Psoas muscle (tissue), 8 donors: ENCODE measurements at regions of chr19 and their contacts with region 1.

Region 1: DNA sequence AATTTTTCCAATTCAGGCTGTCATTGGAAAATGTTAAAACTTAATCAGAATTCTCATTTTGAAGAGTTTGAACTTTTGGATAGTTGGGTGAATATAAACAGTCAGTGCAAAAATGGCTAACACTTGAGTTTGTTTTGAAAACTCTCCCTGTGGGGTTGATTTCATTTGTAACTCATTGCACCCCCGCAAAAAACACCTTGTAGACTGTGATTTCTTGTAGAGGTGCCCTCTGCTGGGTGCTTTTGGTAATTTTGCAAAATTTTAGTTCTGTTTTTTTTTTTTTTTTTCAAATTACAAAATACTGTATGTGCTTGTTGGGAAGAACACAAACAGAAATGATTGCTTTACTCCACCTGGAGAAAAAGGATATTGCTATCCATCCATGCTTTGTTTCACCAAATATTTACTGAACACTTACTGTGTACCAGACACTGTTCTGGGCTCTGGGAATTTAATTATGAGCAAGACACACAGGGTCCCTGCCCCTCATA is 28.2 kb upstream of the GPI start:
- DNase-seq: no peak
- ATAC-seq: peak in 2 of 4 donors; percentile 40 to 54
- H3K4me3 ChIP-seq: no peak overlapping the region
- H3K27ac ChIP-seq: peak overlapping the region; percentile 19
- H3K4me1 ChIP-seq: no peaks in the 10 kb centered on the region
- H3K27me3 ChIP-seq: no peaks in the 10 kb centered on the region
- CTCF ChIP-seq: peak; percentile 69

Region 2: DNA sequence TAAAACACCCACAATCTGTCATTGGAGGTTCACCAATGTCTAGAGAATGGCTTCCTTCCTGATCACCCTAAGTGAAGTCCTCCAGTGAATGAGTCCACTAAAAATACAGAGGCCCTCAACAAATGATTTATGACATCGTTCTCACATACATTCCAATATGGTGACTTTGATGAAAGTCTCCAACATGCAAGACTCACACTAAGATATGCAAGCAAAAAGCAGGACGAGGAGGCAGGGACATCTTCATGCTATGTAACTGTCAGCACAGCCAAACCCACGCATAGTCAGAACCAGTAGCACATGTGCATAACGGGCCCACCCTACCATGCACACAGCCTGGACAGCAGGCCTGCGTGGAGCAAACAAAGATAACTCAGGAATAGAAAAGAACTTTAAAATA is 181.1 kb before region 1 on chr19:
- intact Hi-C with region 1: no loop called
- DNase-seq: no peak
- ATAC-seq: no peak
- H3K4me3 ChIP-seq: no peak overlapping the region
- H3K27ac ChIP-seq: no peak overlapping the region
- H3K4me1 ChIP-seq: no peaks in the 10 kb centered on the region
- H3K27me3 ChIP-seq: no peaks in the 10 kb centered on the region
- CTCF ChIP-seq: no peak

Region 3: GRCh38 chr19:34241513-34242337 is 95.1 kb before region 1 on chr19:
- intact Hi-C with region 1: loop called in 1 of 2 experiments (anchors 5 kb)
- DNase-seq: peak in 1 of 2 donors; percentile 57
- ATAC-seq: peak; percentile 36 to 58 (median 50)
- H3K4me3 ChIP-seq: no peak overlapping the region
- H3K27ac ChIP-seq: no peak overlapping the region
- H3K4me1 ChIP-seq: peaks cover 9% of the 10 kb centered on the region
- H3K27me3 ChIP-seq: no peaks in the 10 kb centered on the region
- CTCF ChIP-seq: peak; percentile 12

Region 4: DNA sequence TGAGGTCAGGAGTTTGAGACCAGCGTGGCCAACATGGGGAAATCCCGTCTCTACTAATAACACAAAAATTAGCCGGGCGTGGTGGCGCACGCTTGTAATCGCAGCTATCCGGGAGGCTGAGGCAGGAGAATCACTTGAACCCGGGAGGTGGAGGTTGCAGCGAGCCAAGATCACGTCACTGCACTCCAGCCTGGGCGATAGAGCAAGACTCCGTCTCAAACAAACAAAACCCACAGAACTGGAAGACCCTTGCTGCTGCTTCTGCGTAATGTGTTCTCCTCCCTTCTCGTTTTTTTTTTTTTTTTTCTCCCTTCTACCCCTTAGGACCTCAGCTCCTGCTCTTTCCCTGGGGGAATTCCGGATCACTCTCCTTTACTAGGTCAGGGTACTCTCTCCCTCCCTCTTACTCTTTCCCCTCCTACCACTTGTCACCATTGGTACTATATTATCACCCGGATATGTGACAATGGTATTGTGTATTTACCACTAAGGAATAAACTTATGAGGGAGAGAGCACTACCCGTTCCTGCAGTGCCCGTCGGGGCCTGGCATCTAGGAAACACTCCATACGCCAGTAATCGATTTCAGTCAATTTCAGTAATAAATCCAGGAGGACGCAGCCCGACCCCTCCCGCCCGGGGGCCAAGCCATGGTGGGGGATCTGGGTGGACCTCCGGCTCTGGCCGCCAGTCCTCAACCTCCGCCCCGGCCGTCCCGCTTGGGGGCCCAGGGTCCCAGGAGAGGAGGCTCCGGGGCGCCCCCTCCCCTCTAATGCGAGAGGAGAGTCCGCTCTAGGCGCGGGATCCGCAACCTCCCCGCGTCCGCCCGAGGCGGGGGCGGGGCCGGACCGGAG is 82.9 kb before region 1 on chr19:
- intact Hi-C with region 1: loop called (anchors 5 kb)
- DNase-seq: peak; percentile 85 to 92
- ATAC-seq: peak; percentile 87 to 92 (median 89)
- H3K4me3 ChIP-seq: peak overlapping the region; percentile 100
- H3K27ac ChIP-seq: peak overlapping the region; percentile 100
- H3K4me1 ChIP-seq: peaks cover 30% of the 10 kb centered on the region
- H3K27me3 ChIP-seq: no peaks in the 10 kb centered on the region
- CTCF ChIP-seq: no peak

Region 5: DNA sequence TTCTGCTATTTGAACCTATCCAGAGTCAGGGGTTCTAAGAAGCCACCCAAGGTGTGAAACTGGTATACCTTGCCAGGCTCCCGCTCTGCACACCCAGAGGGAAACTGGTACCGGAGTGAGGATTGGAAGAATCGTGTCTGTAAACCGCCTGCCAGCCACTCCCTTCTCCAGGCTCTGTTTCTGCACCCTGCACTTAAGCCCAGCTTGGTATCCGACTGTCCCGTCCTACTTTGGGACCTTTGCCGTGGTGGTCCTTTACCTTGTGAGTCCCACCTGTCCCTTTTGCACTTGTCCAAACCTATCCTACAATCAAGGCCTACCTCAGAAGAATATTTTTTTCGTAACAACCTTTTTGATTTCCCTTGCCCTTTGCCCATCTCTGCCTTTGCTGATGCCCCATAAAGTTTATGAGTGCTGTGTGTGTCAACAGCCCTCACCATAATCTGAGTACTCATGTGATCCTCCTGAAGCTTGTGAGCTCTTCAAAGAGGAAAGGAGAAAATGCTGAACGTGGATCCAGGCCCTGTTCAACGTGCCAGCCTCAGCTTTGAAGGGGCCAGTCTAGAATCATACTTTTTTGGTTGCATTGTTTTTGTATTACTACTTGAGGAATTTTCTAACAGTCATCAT is 37.8 kb before region 1 on chr19:
- intact Hi-C with region 1: no loop called
- DNase-seq: no peak
- ATAC-seq: no peak
- H3K4me3 ChIP-seq: no peak overlapping the region
- H3K27ac ChIP-seq: no peak overlapping the region
- H3K4me1 ChIP-seq: no peaks in the 10 kb centered on the region
- H3K27me3 ChIP-seq: no peaks in the 10 kb centered on the region
- CTCF ChIP-seq: no peak

Region 6: GRCh38 chr19:34310471-34310981 is 26.3 kb before region 1 on chr19:
- intact Hi-C with region 1: no loop called
- DNase-seq: no peak
- ATAC-seq: peak in 2 of 4 donors; percentile 33 to 38
- H3K4me3 ChIP-seq: no peak overlapping the region
- H3K27ac ChIP-seq: no peak overlapping the region
- H3K4me1 ChIP-seq: peaks cover 34% of the 10 kb centered on the region
- H3K27me3 ChIP-seq: no peaks in the 10 kb centered on the region
- CTCF ChIP-seq: no peak